Psoas muscle (tissue), 8 donors: ENCODE measurements at regions of chr2 and their contacts with region 1.

Region 1: DNA sequence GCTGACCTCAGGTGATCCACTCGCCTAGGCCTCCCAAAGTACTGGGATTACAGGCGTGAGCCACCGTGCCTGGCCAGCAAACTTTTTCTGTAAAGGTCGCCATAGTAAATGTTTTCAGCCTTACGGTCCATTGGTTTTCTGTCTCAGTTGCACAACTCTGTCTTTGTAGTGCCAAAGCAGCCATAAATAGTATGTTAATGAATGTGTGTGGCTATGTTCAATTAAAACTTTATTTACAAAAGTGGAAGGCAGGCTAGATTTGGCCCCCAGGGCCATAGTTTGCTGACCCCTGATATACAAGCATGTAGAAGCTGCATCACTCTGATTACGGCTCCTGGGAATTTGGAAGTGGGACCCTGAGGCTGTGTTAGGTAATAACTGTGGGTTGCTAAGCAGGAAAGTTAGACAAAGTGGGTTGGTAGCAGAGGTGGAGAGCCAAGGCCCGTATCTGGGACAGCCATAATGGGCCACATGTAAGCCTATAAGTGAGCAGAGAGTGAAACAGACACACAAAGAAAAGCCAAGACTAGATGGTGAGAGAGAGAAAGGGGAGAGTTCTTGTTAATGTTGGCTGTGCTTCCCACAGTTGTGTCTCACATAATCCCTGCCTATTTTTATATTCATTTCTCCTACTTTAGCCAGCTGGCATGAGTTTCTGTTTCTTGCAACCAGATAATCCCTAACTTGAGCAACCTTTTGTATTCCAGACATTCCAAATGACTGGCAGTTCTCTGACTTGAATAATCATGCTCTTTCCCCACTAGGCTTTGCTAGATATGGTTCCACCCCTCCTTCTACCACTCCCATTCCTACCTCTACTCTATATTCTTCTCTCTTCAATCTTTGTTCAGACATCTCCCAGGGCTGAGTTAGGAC is 223.3 kb upstream of the STON1 start:
- DNase-seq: no peak
- ATAC-seq: peak; percentile 85 to 95 (median 92)
- H3K4me3 ChIP-seq: no peak overlapping the region
- H3K27ac ChIP-seq: peak overlapping the region; percentile 85
- H3K4me1 ChIP-seq: peaks cover 11% of the 10 kb centered on the region
- H3K27me3 ChIP-seq: no peaks in the 10 kb centered on the region
- CTCF ChIP-seq: no peak

Region 2: DNA sequence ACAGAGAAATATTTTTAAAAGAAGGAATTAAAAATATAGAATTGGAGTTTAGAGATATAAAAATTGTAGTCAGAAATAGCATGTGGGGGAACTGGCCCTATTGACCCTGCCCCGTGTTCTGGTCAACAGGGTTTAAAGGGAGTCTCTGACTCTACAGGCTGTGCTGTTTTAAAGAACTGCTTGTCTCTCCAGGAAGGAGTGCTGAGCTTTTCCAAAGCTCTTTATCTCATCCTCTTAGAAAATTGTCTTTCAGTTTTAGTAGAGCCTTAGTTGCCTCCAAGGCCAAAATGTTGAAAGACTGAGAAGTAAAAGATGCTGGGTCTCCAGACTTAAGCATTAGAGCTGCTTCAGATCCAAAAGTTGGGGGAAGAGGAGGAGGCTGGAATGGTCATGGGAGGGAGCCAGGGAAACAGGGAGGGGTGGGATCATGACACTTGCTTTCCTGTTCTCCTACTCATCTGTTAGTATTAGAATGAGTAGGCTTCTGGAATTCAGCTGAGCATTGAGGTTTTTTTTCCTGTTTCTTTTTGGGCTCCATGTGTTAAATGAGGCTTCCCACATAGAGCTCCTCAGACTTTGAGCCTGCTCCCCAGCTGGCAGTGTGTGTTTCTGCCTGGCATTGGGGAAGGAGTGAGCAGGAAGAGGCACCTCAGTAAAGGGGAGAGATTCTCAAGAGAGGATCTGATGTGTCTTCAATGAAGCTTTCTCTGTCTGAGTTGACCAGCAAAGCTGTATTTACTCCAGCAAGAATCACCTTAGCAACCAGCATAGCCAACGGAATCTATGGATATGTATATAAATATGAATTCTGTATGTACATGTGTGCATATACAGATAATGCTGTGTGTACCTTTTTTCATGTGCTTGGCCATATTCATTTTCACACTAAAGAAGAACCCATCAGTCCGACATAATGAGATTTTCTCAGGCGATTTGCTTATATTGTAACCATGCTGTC is 213.5 kb before region 1 on chr2:
- intact Hi-C with region 1: no loop called
- DNase-seq: no peak
- ATAC-seq: no peak
- H3K4me3 ChIP-seq: no peak overlapping the region
- H3K27ac ChIP-seq: no peak overlapping the region
- H3K4me1 ChIP-seq: no peaks in the 10 kb centered on the region
- H3K27me3 ChIP-seq: no peaks in the 10 kb centered on the region
- CTCF ChIP-seq: no peak

Region 3: DNA sequence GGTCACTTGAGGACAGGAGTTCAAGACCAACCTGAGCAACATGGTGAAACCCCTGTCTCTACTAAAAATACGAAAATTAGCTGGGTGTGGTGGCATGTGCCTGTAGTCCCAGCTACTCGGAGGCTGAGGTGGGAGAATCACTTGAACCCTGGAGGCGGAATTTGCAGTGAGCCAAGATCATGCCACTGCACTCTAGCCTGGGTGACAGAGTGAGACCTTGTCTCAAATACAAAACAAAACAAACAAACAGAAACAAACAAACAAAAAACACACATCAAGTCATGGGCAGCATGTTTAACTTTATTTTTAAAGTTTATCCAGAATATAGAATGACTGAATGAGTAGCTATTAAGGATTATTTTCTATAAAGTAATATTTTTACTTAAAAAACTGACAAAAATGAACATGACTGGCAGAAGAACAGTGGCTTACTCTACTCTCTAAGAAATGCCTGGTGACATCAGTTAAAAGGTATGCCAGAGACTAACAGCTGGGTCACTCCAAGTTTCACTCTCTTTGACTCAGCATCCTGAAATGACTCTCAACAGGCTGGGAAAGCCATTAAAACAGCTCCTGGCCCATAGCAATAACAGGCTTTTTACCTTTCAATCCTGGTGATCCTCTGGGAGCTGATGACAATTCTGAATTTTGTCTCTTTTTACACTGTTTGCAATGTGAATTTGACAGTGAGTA is 58.3 kb before region 1 on chr2:
- intact Hi-C with region 1: loop called in 1 of 2 experiments (anchors 5 kb)
- DNase-seq: no peak
- ATAC-seq: peak; percentile 90 to 94 (median 92)
- H3K4me3 ChIP-seq: no peak overlapping the region
- H3K27ac ChIP-seq: peak overlapping the region; percentile 84
- H3K4me1 ChIP-seq: peaks cover 34% of the 10 kb centered on the region
- H3K27me3 ChIP-seq: no peaks in the 10 kb centered on the region
- CTCF ChIP-seq: no peak

Region 4: GRCh38 chr2:48258481-48259149 is 48.0 kb before region 1 on chr2:
- intact Hi-C with region 1: loop called in 1 of 2 experiments (anchors 5 kb)
- DNase-seq: no peak
- ATAC-seq: no peak
- H3K4me3 ChIP-seq: no peak overlapping the region
- H3K27ac ChIP-seq: no peak overlapping the region
- H3K4me1 ChIP-seq: no peaks in the 10 kb centered on the region
- H3K27me3 ChIP-seq: no peaks in the 10 kb centered on the region
- CTCF ChIP-seq: no peak